ENCODE measurements at regions of chr16 and their contacts with region 1.

Region 1: GRCh38 chr16:70438969-70439862 is at the start of gene ST3GAL2:
- DNase-seq: peak; percentile 96 to 97
- H3K4me3 ChIP-seq: peak within 1 kb of the TSS; percentile 90
- H3K4me3 Mint-ChIP-seq: peak within 1 kb of the TSS; percentile 92
- H3K27ac Mint-ChIP-seq: peak within 1 kb of the TSS; percentile 67
- H3K4me1 ChIP-seq: peaks cover 45% of the 10 kb centered on the region
- H3K4me1 Mint-ChIP-seq: peaks cover 20% of the 10 kb centered on the region
- H3K27me3 ChIP-seq: no peaks in the 10 kb centered on the region
- H3K27me3 Mint-ChIP-seq: no peaks in the 10 kb centered on the region
- CTCF ChIP-seq: peak; percentile 23 to 46
- total RNA-seq, gene ST3GAL2: 30.3 and 31.1 TPM in 2 replicates

Region 2: GRCh38 chr16:70388006-70388680 is 51.1 kb before region 1 on chr16:
- CTCF ChIA-PET with region 1: no interaction called
- POLR2A ChIA-PET with region 1: no interaction called
- intact Hi-C with region 1: no loop called
- DNase-seq: no peak
- H3K4me3 ChIP-seq: no peak overlapping the region
- H3K4me3 Mint-ChIP-seq: no peak overlapping the region
- H3K27ac Mint-ChIP-seq: no peak overlapping the region
- H3K4me1 ChIP-seq: peaks cover 8% of the 10 kb centered on the region; the same call in 1 of the 2 replicates
- H3K4me1 Mint-ChIP-seq: no peaks in the 10 kb centered on the region
- H3K27me3 ChIP-seq: no peaks in the 10 kb centered on the region
- H3K27me3 Mint-ChIP-seq: no peaks in the 10 kb centered on the region
- CTCF ChIP-seq: no peak

Region 3: DNA sequence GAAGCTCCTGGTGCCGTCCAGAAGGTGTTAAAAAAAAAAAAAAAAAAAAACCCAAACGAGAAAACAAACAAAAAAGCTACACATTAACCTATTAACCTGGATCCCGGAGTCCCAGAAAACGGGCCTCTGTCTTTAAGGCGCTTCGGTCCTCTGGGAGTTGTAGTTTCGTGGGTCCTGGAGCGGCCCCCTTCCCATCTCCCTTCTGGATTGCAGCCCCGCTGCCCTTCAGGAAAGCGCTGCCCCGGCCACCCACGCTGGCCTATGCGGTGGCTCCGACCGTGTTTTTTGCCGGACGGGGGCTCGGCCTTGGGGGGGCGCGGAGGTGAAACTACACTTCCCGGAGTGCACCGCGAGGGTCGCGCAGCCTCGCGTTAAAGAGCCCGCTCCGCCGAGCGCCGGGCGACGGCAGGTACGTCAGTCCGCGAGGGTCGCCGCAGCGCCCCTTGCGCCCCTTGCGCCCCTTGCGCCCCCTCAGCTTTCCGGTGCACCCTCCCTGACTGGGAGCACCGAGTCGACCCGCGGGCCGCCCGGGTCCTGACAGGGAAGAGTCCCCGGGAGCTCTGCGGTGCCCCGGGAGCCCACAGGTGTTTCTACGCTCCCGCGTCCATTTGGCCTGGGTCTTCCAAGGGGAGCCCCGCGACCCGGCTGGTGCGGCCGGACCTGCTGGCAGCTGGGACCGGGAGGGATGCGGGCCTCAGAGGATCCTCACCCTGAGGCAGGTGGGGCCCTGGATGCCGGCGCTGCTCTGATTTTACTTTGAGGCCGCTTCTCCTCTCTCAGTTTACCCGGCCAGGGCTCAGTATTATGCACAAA is 15.2 kb after region 1 on chr16 and contains the start of gene FCSK:
- CTCF ChIA-PET with region 1: interaction called, 6 read pairs
- POLR2A ChIA-PET with region 1: interaction called, 4 read pairs
- intact Hi-C with region 1: loop called (anchors 1 kb)
- DNase-seq: peak; percentile 87 to 90
- H3K4me3 ChIP-seq: peak within 1 kb of the TSS; percentile 79
- H3K4me3 Mint-ChIP-seq: peak within 1 kb of the TSS; percentile 89
- H3K27ac Mint-ChIP-seq: peak within 1 kb of the TSS; percentile 97
- H3K4me1 ChIP-seq: peaks cover 11% of the 10 kb centered on the region
- H3K4me1 Mint-ChIP-seq: peaks cover 6% of the 10 kb centered on the region
- H3K27me3 ChIP-seq: no peaks in the 10 kb centered on the region
- H3K27me3 Mint-ChIP-seq: no peaks in the 10 kb centered on the region
- CTCF ChIP-seq: peak; percentile 24 to 36
- total RNA-seq, gene FCSK: 25.5 and 27.9 TPM in 2 replicates

Region 4: DNA sequence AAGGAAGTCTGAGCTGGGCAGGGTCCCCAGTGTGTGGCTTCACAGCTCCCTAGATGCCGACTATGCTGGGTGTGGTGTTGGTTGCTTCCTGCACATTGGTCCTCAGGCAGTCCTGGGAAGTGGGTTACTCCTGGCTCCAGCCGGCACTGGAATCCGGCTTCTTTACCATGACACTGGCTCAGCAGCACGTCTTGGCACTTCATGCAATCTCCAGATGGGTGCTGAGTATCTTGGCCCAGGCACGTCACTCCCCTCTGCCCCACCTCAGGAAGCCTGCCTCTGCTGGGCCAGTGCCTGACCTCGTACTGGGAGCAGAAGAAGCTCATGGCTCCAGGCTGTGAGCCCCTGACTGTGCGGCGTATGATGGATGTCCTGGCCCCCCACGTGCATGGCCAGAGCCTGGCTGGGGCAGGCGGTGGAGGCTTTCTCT is 39.7 kb after region 1 on chr16:
- CTCF ChIA-PET with region 1: no interaction called
- POLR2A ChIA-PET with region 1: no interaction called
- intact Hi-C with region 1: no loop called
- DNase-seq: no peak
- H3K4me3 ChIP-seq: no peak overlapping the region
- H3K4me3 Mint-ChIP-seq: no peak overlapping the region
- H3K27ac Mint-ChIP-seq: no peak overlapping the region
- H3K4me1 ChIP-seq: peaks cover 8% of the 10 kb centered on the region
- H3K4me1 Mint-ChIP-seq: no peaks in the 10 kb centered on the region
- H3K27me3 ChIP-seq: no peaks in the 10 kb centered on the region; the same call in 1 of the 2 replicates
- H3K27me3 Mint-ChIP-seq: no peaks in the 10 kb centered on the region
- CTCF ChIP-seq: no peak